SK-N-SH (cell line): ENCODE measurements at regions of chr5 and their contacts with region 1.

Region 1: GRCh38 chr5:112995764-112996618 is 19.4 kb downstream of the DCP2 start:
- DNase-seq: peak; percentile 56
- H3K4me3 ChIP-seq: no peak overlapping the region; a peak in 1 of 4 replicates
- H3K27ac ChIP-seq: no peak overlapping the region; a peak in 1 of 4 replicates
- H3K4me1 ChIP-seq: no peaks in the 10 kb centered on the region; a peak in 2 of 4 replicates
- H3K27me3 ChIP-seq: no peaks in the 10 kb centered on the region
- CTCF ChIP-seq: peak; percentile 95
- EP300 ChIP-seq: no peak
- RAD21 ChIP-seq: peak; percentile 96

Region 2: DNA sequence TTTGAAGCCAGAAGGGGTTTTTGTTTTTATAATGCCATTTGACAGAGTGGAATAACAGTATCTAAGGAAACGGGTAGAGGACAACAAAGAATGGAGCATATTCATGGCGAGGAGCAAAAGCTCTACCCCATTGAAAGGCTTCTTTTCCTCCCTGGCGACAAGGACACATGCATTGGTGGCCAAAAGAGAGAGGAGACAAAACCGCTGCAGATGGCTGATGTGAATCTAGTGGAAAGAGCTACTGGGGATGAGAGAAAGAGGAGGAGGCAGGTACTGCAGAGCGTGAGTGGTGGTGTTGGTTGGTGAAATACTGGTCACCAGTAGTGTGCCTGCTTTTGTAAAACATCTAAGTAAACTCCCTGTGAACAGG is 257.8 kb before region 1 on chr5:
- CTCF ChIA-PET with region 1: no interaction called
- POLR2A ChIA-PET with region 1: no interaction called
- DNase-seq: peak; percentile 30
- H3K4me3 ChIP-seq: peak overlapping the region; percentile 80 to 89
- H3K27ac ChIP-seq: peak overlapping the region; percentile 78 to 89; a peak in 3 of 4 replicates
- H3K4me1 ChIP-seq: peaks cover 10 to 22% of the 10 kb centered on the region in 2 experiments; a peak in 3 of 4 replicates
- H3K27me3 ChIP-seq: no peaks in the 10 kb centered on the region
- CTCF ChIP-seq: no peak
- EP300 ChIP-seq: no peak
- RAD21 ChIP-seq: no peak

Region 3: GRCh38 chr5:112958093-112959088 is 37.6 kb before region 1 on chr5:
- CTCF ChIA-PET with region 1: no interaction called
- POLR2A ChIA-PET with region 1: no interaction called
- DNase-seq: no peak
- H3K4me3 ChIP-seq: peak overlapping the region in 1 of 2 experiments; percentile 28; a peak in 1 of 4 replicates
- H3K27ac ChIP-seq: peak overlapping the region; percentile 62 to 97
- H3K4me1 ChIP-seq: peaks cover 9 to 36% of the 10 kb centered on the region in 2 experiments
- H3K27me3 ChIP-seq: no peaks in the 10 kb centered on the region
- CTCF ChIP-seq: no peak
- EP300 ChIP-seq: peak; percentile 27 to 77; a peak in 2 of 4 replicates
- RAD21 ChIP-seq: no peak

Region 4: GRCh38 chr5:112983363-112983762 is 12.6 kb before region 1 on chr5:
- CTCF ChIA-PET with region 1: interaction called, 46 read pairs
- POLR2A ChIA-PET with region 1: no interaction called
- DNase-seq: no peak
- H3K4me3 ChIP-seq: no peak overlapping the region
- H3K27ac ChIP-seq: no peak overlapping the region
- H3K4me1 ChIP-seq: peaks cover 11 to 21% of the 10 kb centered on the region in 2 experiments; a peak in 2 of 4 replicates
- H3K27me3 ChIP-seq: no peaks in the 10 kb centered on the region
- CTCF ChIP-seq: no peak
- EP300 ChIP-seq: no peak
- RAD21 ChIP-seq: no peak

Region 5: DNA sequence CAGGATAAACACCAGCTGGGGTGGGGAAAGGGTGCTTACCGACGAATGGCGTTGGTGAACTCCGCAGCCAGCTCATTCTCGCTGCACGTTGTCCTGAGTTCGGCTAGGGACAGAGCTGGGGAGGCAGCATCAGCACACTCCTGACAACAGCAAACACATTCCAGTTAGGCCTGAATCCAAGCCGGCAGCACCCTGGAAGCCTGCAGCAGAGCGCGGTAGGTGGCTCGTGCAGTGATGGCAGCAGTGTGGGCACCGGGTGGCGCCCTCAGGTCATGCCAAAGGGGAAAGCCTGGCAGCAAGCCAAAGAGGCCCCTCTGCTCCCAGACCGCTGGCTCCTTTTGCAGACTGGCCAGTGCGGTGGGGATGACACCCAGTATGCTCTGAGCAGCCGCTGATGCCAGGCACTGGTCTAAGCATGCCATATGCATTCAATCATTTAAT is 47.5 kb after region 1 on chr5:
- CTCF ChIA-PET with region 1: interaction called, 14 read pairs
- POLR2A ChIA-PET with region 1: no interaction called
- DNase-seq: peak; percentile 88
- H3K4me3 ChIP-seq: no peak overlapping the region
- H3K27ac ChIP-seq: peak overlapping the region in 1 of 2 experiments; percentile 74; a peak in 2 of 4 replicates
- H3K4me1 ChIP-seq: peaks cover 0 to 16% of the 10 kb centered on the region in 2 experiments; a peak in 2 of 4 replicates
- H3K27me3 ChIP-seq: no peaks in the 10 kb centered on the region
- CTCF ChIP-seq: peak; percentile 56
- EP300 ChIP-seq: peak in 1 of 2 experiments; percentile 61; a peak in 2 of 4 replicates
- RAD21 ChIP-seq: peak; percentile 83

Region 6: DNA sequence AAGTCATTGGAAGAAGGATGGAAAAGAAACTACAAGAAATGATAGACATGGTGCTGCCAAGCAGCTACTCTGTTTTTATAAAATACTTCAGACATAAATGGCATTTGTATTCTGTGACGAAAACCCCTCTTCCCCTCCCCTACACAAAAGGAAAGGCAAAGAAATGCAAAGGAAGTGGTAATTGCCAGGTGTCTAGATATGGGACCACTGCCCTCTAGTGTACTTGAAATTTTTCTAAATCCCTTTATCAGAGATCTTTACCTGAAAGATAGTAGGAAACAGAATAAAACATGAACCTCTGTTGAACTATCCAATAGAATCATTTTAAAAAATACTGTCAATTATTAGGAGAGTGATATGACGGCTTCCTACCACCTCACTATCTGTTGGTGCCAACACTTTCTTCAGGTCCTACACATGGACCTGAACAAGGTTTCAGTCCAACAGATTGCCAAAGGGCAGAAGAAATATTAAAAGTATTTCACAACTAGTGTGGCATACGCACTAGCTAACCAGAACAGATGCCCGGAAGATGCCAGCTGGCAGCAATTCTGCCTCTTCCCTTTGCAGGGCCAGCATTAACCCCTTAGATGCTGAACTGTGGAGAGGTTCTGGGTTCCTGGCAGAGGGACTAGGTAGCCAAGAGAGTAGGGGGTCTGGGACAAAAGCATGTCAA is 334.7 kb after region 1 on chr5:
- CTCF ChIA-PET with region 1: interaction called, 21 read pairs
- POLR2A ChIA-PET with region 1: no interaction called
- DNase-seq: peak; percentile 40
- H3K4me3 ChIP-seq: no peak overlapping the region
- H3K27ac ChIP-seq: no peak overlapping the region; a peak in 1 of 4 replicates
- H3K4me1 ChIP-seq: peaks cover 0 to 7% of the 10 kb centered on the region in 2 experiments; a peak in 2 of 4 replicates
- H3K27me3 ChIP-seq: no peaks in the 10 kb centered on the region
- CTCF ChIP-seq: peak; percentile 48
- EP300 ChIP-seq: no peak
- RAD21 ChIP-seq: peak; percentile 80

Region 7: DNA sequence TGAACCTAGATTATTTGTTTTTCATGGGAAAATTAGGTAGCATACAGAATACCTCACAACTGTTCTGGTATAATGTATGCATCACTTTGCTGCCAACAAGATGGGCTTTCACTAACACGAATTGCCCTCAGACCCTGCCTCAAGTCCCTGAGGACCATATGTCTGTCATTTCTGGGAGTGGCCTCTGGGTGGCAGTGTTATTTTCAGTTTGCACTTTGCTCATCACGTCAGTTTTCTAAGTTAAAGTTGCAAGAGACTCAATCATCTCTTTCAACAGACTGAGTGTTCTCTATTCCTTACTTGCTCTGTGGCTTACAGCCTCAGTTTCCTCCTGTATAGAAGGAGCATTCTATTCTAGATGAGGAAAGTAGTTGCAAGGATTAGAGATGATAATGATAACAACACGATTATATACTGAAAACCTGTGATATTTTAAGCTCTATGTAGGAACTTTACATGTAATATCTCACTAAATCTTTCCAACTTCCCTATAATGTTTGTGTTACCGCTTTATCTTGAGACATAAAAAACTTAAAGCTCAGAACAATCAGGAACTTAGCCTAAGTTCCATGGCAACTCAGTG is 383.1 kb after region 1 on chr5:
- CTCF ChIA-PET with region 1: interaction called, 18 read pairs
- POLR2A ChIA-PET with region 1: no interaction called
- DNase-seq: peak; percentile 69
- H3K4me3 ChIP-seq: no peak overlapping the region; a peak in 1 of 4 replicates
- H3K27ac ChIP-seq: no peak overlapping the region
- H3K4me1 ChIP-seq: no peaks in the 10 kb centered on the region
- H3K27me3 ChIP-seq: no peaks in the 10 kb centered on the region
- CTCF ChIP-seq: peak; percentile 83
- EP300 ChIP-seq: no peak
- RAD21 ChIP-seq: peak; percentile 78

Region 8: GRCh38 chr5:113606298-113607134 is 610.5 kb after region 1 on chr5:
- CTCF ChIA-PET with region 1: interaction called, 25 read pairs
- POLR2A ChIA-PET with region 1: no interaction called
- DNase-seq: peak; percentile 66
- H3K4me3 ChIP-seq: peak overlapping the region; percentile 22 to 46; a peak in 2 of 4 replicates
- H3K27ac ChIP-seq: peak overlapping the region in 1 of 2 experiments; percentile 47; a peak in 1 of 4 replicates
- H3K4me1 ChIP-seq: peaks cover 0 to 5% of the 10 kb centered on the region in 2 experiments; a peak in 1 of 4 replicates
- H3K27me3 ChIP-seq: no peaks in the 10 kb centered on the region
- CTCF ChIP-seq: peak; percentile 78
- EP300 ChIP-seq: no peak
- RAD21 ChIP-seq: peak; percentile 90